BJ (cell line): ENCODE measurements at regions of chr1 and their contacts with region 1.

Region 1: GRCh38 chr1:210360852-210361477 is 32.3 kb downstream of the HHAT start:
- DNase-seq: peak; percentile 26
- H3K4me3 ChIP-seq: no peak overlapping the region
- H3K27me3 ChIP-seq: no peaks in the 10 kb centered on the region
- CTCF ChIP-seq: peak; percentile 80

Region 2: DNA sequence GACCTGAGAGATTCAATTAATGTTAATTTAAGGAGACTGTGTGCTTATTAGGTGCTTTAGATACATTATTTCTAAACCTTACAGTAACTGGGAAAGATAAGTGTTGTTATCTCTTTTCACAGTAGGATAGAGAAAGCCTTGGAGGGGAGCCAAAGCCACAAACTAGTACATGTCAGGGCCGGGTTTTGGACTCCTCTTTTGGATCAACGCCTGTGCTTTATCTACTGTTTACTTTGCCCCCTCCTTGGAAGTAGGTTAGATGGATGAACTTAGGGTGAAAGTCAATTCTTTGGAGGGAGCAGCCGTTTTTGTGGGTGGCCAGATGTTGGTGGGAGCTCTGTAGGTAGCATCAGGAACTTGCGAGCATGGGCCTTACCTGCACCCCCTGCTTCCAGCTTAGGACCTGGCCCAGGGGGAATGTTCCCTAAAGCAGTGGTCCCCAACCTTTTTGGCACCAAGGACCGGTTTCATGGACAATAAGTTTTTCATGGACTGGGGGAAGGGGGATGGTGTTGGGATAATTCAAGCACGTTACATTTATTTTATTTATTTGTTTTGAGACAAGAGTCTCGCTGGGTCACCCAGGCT is 30.6 kb before region 1 on chr1:
- CTCF ChIA-PET with region 1: interaction called, 13 read pairs
- POLR2A ChIA-PET with region 1: no interaction called
- DNase-seq: no peak
- H3K4me3 ChIP-seq: no peak overlapping the region
- H3K27me3 ChIP-seq: no peaks in the 10 kb centered on the region
- CTCF ChIP-seq: no peak

Region 3: DNA sequence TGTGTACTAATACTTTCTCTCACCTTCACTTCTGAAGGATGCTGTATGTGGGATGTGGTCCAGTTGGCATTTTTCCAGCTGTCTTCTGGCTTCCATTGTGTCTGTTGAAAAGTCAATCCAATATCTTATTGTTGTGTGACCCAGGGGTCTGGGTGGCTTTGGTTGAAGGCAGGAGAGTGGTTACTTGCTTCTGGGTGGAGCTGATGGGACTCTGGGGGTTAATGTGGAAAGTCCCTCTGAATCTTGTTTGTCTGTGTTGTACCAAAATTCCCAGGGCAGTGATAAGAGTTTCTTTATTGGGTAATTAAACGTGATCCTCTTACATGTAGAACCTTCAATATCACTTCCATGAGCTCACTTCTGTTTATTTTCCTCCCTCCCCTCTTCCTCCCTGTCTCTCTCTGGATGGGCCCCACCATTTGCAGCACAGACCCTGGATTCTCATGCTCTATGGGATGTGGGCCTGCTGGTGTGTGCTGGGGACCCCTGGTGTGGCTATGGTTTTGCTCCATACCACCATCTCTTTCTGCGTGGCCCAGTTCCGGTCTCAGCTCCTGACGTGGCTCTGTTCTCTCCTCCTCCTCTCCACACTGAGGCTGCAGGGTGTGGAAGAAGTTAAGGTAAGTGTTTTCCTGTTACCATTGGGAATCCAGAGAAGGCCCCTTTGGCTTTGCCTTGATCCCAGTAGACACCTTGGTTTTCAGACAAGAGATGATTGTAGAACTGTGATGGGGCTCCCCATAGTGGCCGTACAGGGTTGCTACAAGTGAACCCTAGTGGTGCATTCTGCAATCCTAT is 39.3 kb after region 1 on chr1:
- CTCF ChIA-PET with region 1: interaction called, 287 read pairs
- POLR2A ChIA-PET with region 1: interaction called, 3 read pairs
- DNase-seq: no peak
- H3K4me3 ChIP-seq: no peak overlapping the region
- H3K27me3 ChIP-seq: no peaks in the 10 kb centered on the region
- CTCF ChIP-seq: peak; percentile 92